GM18951 (cell line): ENCODE measurements at regions of chr1 and their contacts with region 1.

Region 1: DNA sequence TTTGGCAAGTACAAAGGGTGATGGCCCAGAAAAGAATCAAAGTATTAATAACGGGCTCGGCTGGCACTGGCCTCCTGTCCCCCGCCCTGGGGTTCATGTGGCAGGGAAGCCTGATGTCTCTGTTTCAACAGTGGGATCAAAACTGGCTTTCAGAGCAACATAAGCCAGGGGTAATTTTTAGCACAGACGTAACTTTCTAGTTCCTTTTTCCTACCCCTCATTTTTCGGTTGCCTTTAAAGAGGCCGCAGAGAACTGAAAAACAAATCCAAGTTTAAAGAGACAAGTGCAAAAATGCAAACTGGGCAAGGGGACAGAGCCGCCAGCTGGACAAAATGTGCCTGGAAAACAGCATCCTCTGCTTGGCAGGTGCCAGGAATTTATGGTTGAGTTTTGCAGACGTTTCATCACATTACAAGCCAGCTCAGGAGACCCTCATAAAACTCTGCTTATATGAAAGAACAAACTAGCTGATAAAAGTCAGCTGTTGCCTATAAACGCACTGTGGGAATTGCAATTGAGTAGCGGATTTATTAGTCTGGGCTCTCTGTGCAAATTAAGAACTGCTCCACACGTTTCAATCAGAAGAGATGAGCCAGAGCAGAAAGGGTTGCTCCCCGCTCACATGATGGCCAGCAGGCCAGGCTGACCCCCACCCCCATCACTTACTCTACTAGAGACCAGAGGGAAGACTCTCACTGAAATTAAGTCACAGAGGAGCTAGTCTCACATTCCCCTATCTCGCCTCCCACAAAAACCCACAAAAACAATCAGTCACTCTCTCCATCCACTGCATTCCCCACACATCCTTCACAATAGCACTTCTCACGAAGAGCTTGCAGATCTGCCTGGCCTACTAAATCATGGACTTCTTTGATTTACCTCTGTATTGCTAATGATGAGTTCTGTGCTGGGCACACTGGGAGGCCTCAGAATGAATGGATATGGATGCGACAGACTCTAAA is 15.8 kb upstream of the CDCA8 start:
- POLR2A ChIP-seq: peak; percentile 41

Region 2: GRCh38 chr1:37449936-37450335 is 226.6 kb before region 1 on chr1:
- in situ Hi-C with region 1: loop called (anchors 10 kb)
- POLR2A ChIP-seq: no peak

Region 3: GRCh38 chr1:37606481-37607263 is 69.9 kb before region 1 on chr1:
- in situ Hi-C with region 1: loop called (anchors 5 kb)
- POLR2A ChIP-seq: no peak

Region 4: DNA sequence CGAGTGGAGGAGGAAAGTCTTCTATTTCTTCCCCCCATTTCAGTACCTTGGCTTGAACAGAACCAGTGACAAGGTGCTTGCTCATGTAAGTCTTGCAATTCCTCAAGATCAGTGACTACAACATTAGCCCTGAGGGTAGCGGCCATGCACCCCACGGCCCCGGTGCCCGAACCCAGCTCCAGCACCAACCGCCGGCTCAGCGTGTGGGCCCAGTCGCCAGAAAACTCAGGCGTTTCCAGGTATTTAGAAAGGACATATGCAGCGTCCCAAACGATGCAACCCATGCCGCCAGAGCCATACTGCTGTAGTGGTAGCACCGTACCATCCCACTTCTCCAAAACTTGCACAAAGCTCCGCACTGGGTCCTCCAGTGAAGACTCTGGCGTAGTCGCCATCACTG is 105.9 kb after region 1 on chr1:
- in situ Hi-C with region 1: no loop called
- POLR2A ChIP-seq: no peak

Region 5: GRCh38 chr1:37958690-37959089 is 282.1 kb after region 1 on chr1:
- in situ Hi-C with region 1: no loop called
- POLR2A ChIP-seq: no peak